ENCODE measurements at regions of chr1 and their contacts with region 1.

Region 1: GRCh38 chr1:9651565-9652378 is at the start of gene PIK3CD:
- DNase-seq: peak; percentile 25
- H3K4me3 Mint-ChIP-seq: peak within 1 kb of the TSS; percentile 96
- H3K27ac Mint-ChIP-seq: peak within 1 kb of the TSS; percentile 92
- H3K4me1 Mint-ChIP-seq: peaks cover 47% of the 10 kb centered on the region
- H3K27me3 Mint-ChIP-seq: no peaks in the 10 kb centered on the region
- total RNA-seq, gene PIK3CD: 184 and 189 TPM in 2 replicates

Region 2: GRCh38 chr1:9539165-9539828 is 112.5 kb before region 1 on chr1 and contains the start of gene SLC25A33:
- intact Hi-C with region 1: no loop called
- DNase-seq: peak; percentile 97
- H3K4me3 Mint-ChIP-seq: peak within 1 kb of the TSS; percentile 92
- H3K27ac Mint-ChIP-seq: peak within 1 kb of the TSS; percentile 84
- H3K4me1 Mint-ChIP-seq: peaks cover 28% of the 10 kb centered on the region
- H3K27me3 Mint-ChIP-seq: no peaks in the 10 kb centered on the region
- total RNA-seq, gene SLC25A33: 9.6 and 10.4 TPM in 2 replicates

Region 3: GRCh38 chr1:9671377-9672140 is 19.8 kb after region 1 on chr1:
- intact Hi-C with region 1: loop called (anchors 2 kb)
- DNase-seq: no peak
- H3K4me3 Mint-ChIP-seq: no peak overlapping the region
- H3K27ac Mint-ChIP-seq: peak overlapping the region; percentile 59
- H3K4me1 Mint-ChIP-seq: peaks cover 34% of the 10 kb centered on the region
- H3K27me3 Mint-ChIP-seq: no peaks in the 10 kb centered on the region

Region 4: DNA sequence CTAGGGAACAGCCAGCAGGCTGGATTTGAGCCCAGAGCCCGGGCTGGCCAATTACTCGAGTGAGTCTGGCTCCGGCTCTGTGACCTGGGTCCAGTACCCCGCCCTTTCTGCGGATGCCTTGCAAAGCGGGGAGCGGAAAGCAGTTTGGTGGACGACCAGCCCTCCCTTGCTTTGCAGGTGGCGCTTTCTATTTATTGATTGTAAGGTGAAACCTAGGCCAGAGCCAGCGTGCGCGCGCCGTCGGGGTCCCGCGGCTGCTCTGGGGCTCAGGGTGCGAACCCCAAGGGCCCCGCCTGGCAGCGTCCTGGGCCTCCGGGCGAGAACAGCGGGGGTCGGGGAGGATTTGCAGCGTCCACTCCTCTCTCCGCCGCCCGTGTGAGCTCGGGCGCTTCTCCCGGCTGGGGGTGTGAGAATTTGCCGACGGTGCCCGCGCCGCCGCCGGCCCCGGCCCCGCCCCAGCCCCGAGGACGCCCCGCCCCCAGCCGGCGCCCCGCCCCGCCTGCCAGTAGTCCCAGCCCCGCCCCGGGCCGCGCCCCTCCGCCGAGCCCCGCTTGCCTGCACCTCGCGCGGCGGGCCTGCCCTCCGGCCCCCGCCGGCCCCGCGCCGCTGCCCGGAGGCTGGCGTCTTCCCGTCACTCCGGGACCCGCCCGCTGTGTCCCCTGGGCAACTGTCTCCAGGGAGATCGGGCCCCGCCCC is 37.4 kb after region 1 on chr1:
- intact Hi-C with region 1: loop called (anchors 2 kb)
- DNase-seq: peak; percentile 74
- H3K4me3 Mint-ChIP-seq: peak overlapping the region; percentile 65
- H3K27ac Mint-ChIP-seq: no peak overlapping the region
- H3K4me1 Mint-ChIP-seq: peaks cover 57% of the 10 kb centered on the region
- H3K27me3 Mint-ChIP-seq: no peaks in the 10 kb centered on the region

Region 5: DNA sequence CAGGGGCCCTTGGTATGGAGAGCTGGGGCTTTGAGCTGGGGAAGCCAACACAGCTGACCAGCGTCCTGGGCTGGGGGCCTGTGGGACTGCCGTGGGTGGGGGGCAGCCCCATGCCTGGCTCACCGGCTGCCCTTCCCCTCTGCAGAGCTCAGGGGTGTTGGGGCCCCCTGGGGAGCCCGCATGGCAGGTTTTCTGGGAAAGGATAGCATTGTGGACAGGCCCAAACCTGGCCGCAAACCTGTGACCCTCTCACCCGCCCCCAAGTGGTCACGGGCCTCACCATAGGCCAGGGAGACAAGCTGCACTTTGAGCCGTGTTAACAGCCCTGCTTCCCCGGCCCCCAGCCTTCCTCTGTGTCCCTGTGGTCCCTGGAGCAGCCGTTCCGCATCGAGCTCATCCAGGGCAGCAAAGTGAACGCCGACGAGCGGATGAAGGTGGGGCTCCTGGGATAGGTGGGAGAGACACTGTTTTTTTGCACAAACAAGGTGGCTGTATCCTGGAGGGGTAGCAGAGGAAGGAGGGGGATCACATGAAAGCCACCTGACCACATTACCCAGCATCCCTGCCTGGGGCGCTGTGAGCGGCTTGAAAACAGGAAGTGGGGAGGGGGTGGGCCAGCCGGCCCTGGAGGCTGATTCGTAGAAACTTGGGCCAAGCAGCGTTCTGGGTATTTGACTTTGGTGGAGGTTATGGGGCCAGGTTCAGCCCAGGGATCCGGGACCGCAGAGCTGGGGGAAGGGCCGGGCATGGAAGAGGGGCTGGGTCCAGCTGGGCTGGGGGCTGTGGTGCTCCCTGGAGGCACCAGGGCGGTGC is 65.6 kb after region 1 on chr1:
- intact Hi-C with region 1: loop called (anchors 2 kb)
- DNase-seq: peak; percentile 87
- H3K4me3 Mint-ChIP-seq: peak overlapping the region; percentile 82
- H3K27ac Mint-ChIP-seq: peak overlapping the region; percentile 87
- H3K4me1 Mint-ChIP-seq: peaks cover 38% of the 10 kb centered on the region
- H3K27me3 Mint-ChIP-seq: no peaks in the 10 kb centered on the region